ENCODE measurements at regions of chr10 and their contacts with region 1.

Region 1: GRCh38 chr10:119478111-119478802 is 64.3 kb downstream of the RGS10 start:
- DNase-seq: peak; percentile 76
- H3K4me3 Mint-ChIP-seq: peak overlapping the region; percentile 37
- H3K27ac Mint-ChIP-seq: peak overlapping the region; percentile 14
- H3K4me1 Mint-ChIP-seq: peaks cover 29% of the 10 kb centered on the region
- H3K27me3 Mint-ChIP-seq: no peaks in the 10 kb centered on the region

Region 2: GRCh38 chr10:119489991-119490326 is 11.7 kb after region 1 on chr10:
- CTCF ChIA-PET with region 1: interaction called, 39 read pairs
- intact Hi-C with region 1: loop called (anchors 1 kb)
- DNase-seq: no peak
- H3K4me3 Mint-ChIP-seq: peak overlapping the region; percentile 79
- H3K27ac Mint-ChIP-seq: peak overlapping the region; percentile 91
- H3K4me1 Mint-ChIP-seq: peaks cover 50% of the 10 kb centered on the region
- H3K27me3 Mint-ChIP-seq: no peaks in the 10 kb centered on the region

Region 3: GRCh38 chr10:119496273-119496672 is 18.0 kb after region 1 on chr10:
- CTCF ChIA-PET with region 1: interaction called, 39 read pairs
- intact Hi-C with region 1: loop called (anchors 1 kb)
- DNase-seq: peak; percentile 79
- H3K4me3 Mint-ChIP-seq: no peak overlapping the region
- H3K27ac Mint-ChIP-seq: peak overlapping the region; percentile 62
- H3K4me1 Mint-ChIP-seq: peaks cover 85% of the 10 kb centered on the region
- H3K27me3 Mint-ChIP-seq: no peaks in the 10 kb centered on the region

Region 4: DNA sequence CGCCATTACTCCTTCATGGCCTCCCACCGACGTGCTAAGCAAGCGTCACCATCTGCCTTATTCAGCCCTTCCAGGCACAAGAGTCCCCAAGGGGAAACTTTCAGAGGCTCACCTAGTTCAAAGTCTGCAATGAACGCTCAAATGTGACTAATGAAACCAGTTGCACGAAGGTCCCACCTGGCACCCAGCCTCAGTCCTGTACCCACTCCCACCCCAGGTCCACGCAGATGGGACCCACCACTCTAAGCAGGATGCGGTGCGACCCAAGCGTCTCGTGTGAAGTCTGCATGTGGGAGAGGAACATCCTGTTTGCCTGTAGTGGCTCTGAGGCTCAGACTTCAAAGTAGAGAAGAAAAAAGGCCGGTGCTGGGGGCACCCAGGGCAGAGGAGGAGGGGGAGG is 24.0 kb after region 1 on chr10:
- CTCF ChIA-PET with region 1: no interaction called
- intact Hi-C with region 1: loop called (anchors 1 kb)
- DNase-seq: peak; percentile 93
- H3K4me3 Mint-ChIP-seq: peak overlapping the region; percentile 47
- H3K27ac Mint-ChIP-seq: peak overlapping the region; percentile 99
- H3K4me1 Mint-ChIP-seq: peaks cover 98% of the 10 kb centered on the region
- H3K27me3 Mint-ChIP-seq: no peaks in the 10 kb centered on the region

Measured in activated naive CD4-positive, alpha-beta T cell treated with anti-CD3 and anti-CD28 coated beads for 36 hours (primary cell).